MCF 10A (cell line): ENCODE measurements at regions of chr2 and their contacts with region 1.

Region 1: GRCh38 chr2:17309741-17310339 is 208.4 kb downstream of the RAD51AP2 start:
- DNase-seq: peak; percentile 83
- H3K4me3 Mint-ChIP-seq: no peak overlapping the region
- H3K27ac Mint-ChIP-seq: no peak overlapping the region
- H3K4me1 Mint-ChIP-seq: no peaks in the 10 kb centered on the region
- H3K27me3 Mint-ChIP-seq: no peaks in the 10 kb centered on the region
- CTCF ChIP-seq: peak; percentile 80

Region 2: DNA sequence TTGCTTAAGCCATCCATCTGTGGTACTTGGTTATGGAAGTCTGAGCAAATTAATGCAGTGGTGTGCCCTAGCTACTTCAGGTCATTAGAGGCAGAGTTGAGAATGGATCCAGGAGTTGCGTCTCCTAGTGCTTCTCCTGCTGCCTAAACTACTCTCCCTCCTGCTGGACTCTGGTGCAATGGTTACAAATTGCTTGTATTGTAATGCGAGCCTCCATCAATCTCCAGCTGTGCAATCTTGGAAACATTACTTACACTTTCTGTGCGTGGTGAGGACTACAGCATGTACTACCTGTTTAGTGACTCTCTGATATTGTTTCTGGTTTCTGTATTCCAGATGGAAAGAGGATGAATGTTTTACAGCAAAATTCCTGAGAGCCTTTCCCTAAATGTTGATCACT is 525.2 kb before region 1 on chr2:
- CTCF ChIA-PET with region 1: interaction called, 19 read pairs
- POLR2A ChIA-PET with region 1: no interaction called
- intact Hi-C with region 1: no loop called
- DNase-seq: no peak
- H3K4me3 Mint-ChIP-seq: no peak overlapping the region
- H3K27ac Mint-ChIP-seq: no peak overlapping the region
- H3K4me1 Mint-ChIP-seq: no peaks in the 10 kb centered on the region
- H3K27me3 Mint-ChIP-seq: no peaks in the 10 kb centered on the region
- CTCF ChIP-seq: no peak

Region 3: GRCh38 chr2:17156086-17156485 is 153.8 kb before region 1 on chr2:
- CTCF ChIA-PET with region 1: interaction called, 10 read pairs
- POLR2A ChIA-PET with region 1: no interaction called
- intact Hi-C with region 1: no loop called
- DNase-seq: no peak
- H3K4me3 Mint-ChIP-seq: no peak overlapping the region
- H3K27ac Mint-ChIP-seq: no peak overlapping the region
- H3K4me1 Mint-ChIP-seq: no peaks in the 10 kb centered on the region
- H3K27me3 Mint-ChIP-seq: no peaks in the 10 kb centered on the region
- CTCF ChIP-seq: no peak

Region 4: GRCh38 chr2:17171446-17172049 is 138.3 kb before region 1 on chr2:
- CTCF ChIA-PET with region 1: interaction called, 19 read pairs
- POLR2A ChIA-PET with region 1: interaction called, 3 read pairs
- intact Hi-C with region 1: loop called (anchors 1 kb)
- DNase-seq: peak; percentile 63
- H3K4me3 Mint-ChIP-seq: no peak overlapping the region
- H3K27ac Mint-ChIP-seq: no peak overlapping the region
- H3K4me1 Mint-ChIP-seq: no peaks in the 10 kb centered on the region
- H3K27me3 Mint-ChIP-seq: no peaks in the 10 kb centered on the region
- CTCF ChIP-seq: peak; percentile 39

Region 5: DNA sequence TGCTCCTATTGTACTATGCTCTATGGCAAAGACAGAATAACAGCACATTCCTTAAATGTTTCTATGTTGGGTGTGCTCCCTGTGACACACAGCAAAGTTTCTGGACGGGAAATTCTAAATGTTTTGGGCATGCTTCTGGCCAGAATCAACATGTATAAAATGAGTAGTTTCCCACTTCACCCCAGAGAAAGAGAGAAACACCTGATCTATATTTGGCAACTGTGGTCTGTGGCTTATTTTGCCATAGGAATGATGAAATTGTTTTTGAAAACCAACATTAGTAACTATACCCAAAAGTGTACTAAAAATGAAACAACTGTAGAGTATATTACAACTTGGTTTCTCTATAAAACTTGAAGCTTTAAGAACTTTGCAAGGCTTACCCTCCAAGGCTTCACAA is 119.3 kb after region 1 on chr2:
- CTCF ChIA-PET with region 1: interaction called, 12 read pairs
- POLR2A ChIA-PET with region 1: no interaction called
- intact Hi-C with region 1: no loop called
- DNase-seq: peak; percentile 79
- H3K4me3 Mint-ChIP-seq: no peak overlapping the region
- H3K27ac Mint-ChIP-seq: peak overlapping the region; percentile 90
- H3K4me1 Mint-ChIP-seq: peaks cover 13% of the 10 kb centered on the region
- H3K27me3 Mint-ChIP-seq: no peaks in the 10 kb centered on the region
- CTCF ChIP-seq: no peak

Region 6: GRCh38 chr2:17869128-17869527 is 559.3 kb after region 1 on chr2:
- CTCF ChIA-PET with region 1: no interaction called
- POLR2A ChIA-PET with region 1: no interaction called
- intact Hi-C with region 1: no loop called
- DNase-seq: peak; percentile 50
- H3K4me3 Mint-ChIP-seq: no peak overlapping the region
- H3K27ac Mint-ChIP-seq: no peak overlapping the region
- H3K4me1 Mint-ChIP-seq: no peaks in the 10 kb centered on the region
- H3K27me3 Mint-ChIP-seq: no peaks in the 10 kb centered on the region
- CTCF ChIP-seq: no peak